ENCODE measurements at regions of chr4 and their contacts with region 1.

Region 1: GRCh38 chr4:75584067-75584466 is 28.2 kb downstream of the ODAPH start:
- DNase-seq: no peak
- ATAC-seq: no peak
- H3K4me3 ChIP-seq: no peak overlapping the region
- H3K27ac ChIP-seq: no peak overlapping the region
- H3K4me1 ChIP-seq: no peaks in the 10 kb centered on the region
- H3K27me3 ChIP-seq: no peaks in the 10 kb centered on the region
- CTCF ChIP-seq: no peak
- POLR2A ChIP-seq: no peak

Region 2: DNA sequence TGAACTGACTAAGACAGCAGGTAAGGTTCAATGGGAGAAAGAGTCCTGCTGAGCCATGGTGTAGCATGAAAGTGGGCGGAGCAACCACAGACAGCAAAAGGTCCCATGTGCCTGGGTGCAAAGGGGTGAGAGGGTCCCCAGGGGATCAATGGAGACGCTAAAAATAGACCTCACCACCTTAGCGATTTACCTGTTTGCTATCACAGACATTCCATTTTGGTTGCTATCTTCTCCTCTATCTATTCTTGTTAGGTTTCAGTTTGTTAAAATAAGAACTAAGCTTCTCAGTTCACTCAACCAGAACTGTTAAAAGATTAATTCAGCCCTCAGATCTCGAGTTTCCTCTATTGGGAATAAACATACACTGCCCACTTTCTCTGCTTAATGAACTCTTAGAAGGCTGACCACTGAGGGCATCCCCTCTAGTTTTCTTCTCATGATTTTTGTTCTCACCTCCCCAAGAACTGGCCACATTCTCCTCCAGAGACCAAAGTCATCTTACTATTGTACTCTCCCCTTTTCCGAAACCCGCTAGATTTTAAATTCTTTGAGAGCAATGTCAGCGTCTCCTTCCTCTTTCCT is 514.5 kb before region 1 on chr4:
- intact Hi-C with region 1: no loop called
- DNase-seq: no peak
- ATAC-seq: no peak
- H3K4me3 ChIP-seq: no peak overlapping the region
- H3K27ac ChIP-seq: no peak overlapping the region
- H3K4me1 ChIP-seq: no peaks in the 10 kb centered on the region
- H3K27me3 ChIP-seq: no peaks in the 10 kb centered on the region
- CTCF ChIP-seq: no peak
- POLR2A ChIP-seq: no peak

Region 3: DNA sequence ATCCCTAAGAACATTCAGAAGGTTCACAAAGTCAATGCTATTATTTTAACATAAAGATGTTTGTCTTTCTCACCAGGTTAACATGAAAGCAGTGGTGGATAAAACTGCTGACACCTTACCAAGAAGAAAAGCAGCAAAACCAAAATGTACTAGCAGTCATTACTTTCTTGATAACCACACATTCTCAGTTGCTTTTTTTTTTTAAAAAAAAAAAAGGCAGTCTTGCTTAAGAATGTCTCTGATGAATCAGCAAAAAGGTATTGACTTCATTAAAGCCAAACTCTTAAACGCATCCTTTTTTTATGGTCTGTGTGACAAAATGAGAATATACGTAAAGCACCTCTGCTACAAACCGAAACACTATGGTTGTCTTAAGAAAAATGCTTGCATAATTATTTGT is 14.3 kb after region 1 on chr4:
- intact Hi-C with region 1: loop called in 1 of 10 experiments (anchors 1 kb)
- DNase-seq: no peak
- ATAC-seq: no peak
- H3K4me3 ChIP-seq: no peak overlapping the region
- H3K27ac ChIP-seq: no peak overlapping the region
- H3K4me1 ChIP-seq: no peaks in the 10 kb centered on the region
- H3K27me3 ChIP-seq: no peaks in the 10 kb centered on the region
- CTCF ChIP-seq: no peak
- POLR2A ChIP-seq: no peak

Measured in heart left ventricle (tissue), 16 donors.